ENCODE measurements at regions of chr18 and their contacts with region 1.

Region 1: DNA sequence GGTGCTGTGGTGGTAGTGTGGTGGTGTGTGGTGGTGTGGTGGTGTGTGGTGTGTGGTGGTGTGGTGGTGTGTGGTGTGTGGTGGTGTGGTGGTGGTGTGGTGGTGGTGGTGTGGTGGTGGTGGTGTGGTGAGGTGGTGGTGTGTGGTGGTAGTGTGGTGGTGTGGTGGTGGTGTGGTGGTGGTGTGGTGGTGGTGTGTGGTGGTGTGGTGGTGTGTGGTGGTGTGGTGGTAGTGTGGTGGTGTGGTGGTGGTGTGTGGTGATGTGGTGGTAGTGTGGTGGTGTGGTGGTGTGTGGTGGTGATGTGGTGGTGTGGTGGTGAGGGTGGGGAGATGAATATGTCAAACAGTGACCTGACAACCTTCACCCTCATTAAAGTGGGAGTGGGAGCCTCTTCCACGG is 55.6 kb upstream of the DLGAP1 start:
- DNase-seq: peak; percentile 27
- CTCF ChIP-seq: no peak

Region 2: DNA sequence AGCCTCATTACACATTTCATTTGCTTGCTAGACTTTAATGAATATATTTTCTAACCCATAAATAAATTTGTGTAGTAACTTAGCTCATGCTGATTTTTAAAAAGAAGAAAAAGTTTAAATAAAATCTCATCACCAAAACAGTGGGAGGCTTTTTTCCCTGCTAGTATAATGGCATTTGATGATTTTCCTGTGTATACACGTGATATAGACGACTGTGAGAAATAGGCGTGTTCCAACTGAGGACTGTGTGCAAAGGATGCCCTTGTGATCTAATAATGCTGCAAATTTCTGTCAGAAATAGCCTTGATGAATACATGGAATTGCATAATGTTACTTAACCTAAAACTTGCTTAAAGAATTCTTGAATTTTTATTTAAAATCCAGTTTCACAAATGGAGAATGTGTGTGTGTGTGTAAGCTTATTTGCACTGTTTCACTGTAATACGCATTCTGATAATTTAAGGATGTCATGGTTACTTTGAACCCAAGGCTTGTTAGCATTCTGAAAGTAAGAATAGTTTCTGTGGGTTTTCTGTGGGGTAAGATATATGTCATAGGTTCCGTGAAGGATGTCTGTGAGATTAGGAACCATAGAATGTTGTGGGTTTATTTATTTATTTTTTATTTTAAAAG is 233.6 kb before region 1 on chr18:
- in situ Hi-C with region 1: no loop called
- DNase-seq: peak; percentile 21
- CTCF ChIP-seq: no peak

Region 3: DNA sequence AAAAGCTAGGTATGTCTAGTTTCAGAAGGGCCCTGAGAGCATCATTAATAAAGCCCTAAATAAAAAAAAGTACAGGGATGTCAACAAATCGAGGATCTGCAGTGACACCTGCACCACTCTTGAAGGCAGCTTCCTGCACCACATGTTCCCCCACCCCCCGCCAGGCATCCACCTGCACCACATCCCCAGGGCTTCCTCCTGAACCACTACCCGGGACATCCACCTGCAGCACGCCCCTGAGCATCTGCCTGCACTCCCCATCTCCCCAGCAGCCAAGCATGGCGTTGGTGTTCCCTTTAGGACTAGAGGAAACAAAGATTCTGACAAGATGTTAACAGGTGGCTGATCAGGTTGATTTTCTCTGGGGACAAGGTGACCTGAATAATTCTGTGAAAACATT is 110.8 kb before region 1 on chr18:
- in situ Hi-C with region 1: loop called (anchors 25 kb)
- DNase-seq: no peak
- CTCF ChIP-seq: no peak